ENCODE measurements at regions of chr2 and their contacts with region 1.

Region 1: DNA sequence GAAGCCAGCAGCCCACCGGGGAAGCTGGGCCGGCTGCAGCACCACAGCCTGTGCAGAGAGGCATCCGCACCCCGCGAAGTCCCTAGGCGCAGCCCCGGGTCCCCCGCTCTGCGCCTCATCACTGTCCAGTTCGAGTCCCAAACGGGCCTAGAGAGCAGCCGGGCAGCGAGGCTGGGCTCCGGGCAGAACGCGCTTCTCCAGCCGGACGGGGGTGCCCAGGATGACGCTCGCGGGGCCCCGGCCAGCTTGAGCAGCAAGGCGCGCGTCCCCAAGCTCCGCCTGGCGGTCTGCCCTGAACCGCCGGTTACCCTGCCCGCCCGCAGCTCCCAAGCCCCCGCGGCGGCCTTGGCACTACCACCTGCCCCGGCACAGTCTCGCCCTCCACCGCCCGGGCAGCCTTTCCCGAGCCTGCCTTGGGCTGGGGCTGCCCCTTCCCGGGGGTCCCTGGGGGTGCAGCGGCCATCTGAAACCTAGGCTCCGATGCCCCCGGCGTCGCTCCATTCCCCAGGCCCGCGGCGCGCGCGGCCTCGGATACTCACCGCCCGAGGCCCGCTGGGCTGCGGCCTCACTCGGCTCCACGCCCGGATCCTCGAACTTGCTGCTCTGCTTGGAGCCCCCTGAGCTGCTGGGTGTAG is 591 bp downstream of the SLC16A14 start:
- DNase-seq: peak; percentile 64
- H3K4me3 Mint-ChIP-seq: peak overlapping the region; percentile 87
- H3K27ac Mint-ChIP-seq: peak overlapping the region; percentile 19
- H3K4me1 Mint-ChIP-seq: peaks cover 18% of the 10 kb centered on the region
- H3K27me3 Mint-ChIP-seq: peaks cover 55% of the 10 kb centered on the region

Region 2: GRCh38 chr2:230007931-230008707 is 60.0 kb before region 1 on chr2:
- CTCF ChIA-PET with region 1: interaction called, 15 read pairs
- DNase-seq: peak; percentile 90
- H3K4me3 Mint-ChIP-seq: no peak overlapping the region
- H3K27ac Mint-ChIP-seq: no peak overlapping the region
- H3K4me1 Mint-ChIP-seq: peaks cover 4% of the 10 kb centered on the region
- H3K27me3 Mint-ChIP-seq: no peaks in the 10 kb centered on the region